ENCODE measurements at regions of chr22 and their contacts with region 1.

Region 1: DNA sequence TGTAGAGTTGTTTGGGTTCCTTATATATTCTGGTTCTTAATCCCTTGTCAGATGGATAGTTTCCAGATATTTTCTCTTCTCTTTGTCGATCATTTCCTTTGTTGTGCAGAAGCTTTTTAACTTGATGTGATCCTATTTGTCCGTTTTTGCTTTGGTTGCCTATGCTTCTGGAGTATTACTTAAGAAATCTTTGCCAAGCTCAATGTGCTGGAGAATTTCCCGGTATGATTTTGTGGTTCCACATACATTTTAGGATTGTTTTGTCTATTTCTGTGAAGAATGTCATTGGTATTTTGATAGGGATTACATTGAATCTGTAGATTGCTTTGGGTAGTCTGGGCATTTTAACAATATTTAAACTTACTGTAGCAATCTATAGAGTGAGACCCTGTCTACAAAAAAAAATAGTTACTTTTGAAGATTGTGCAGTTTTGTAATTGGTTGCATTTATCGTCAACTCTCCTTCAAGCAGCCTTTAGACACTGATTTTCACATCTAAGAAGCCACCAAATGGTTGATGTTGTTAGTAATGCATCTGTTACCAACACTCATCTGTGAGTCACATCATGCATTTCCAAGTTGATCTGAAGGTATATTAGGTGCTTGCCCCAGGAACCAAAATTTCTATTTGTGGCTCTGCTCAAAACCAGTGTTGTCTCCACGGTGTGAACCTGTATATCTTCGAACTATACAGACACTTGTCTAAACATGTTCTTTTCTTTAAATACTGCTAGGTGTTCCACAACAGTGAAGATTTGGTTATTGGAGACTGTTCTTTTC is 21.4 kb downstream of the XRCC6 start:
- DNase-seq: no peak
- ATAC-seq: no peak
- H3K4me3 Mint-ChIP-seq: no peak overlapping the region
- H3K27ac Mint-ChIP-seq: no peak overlapping the region
- H3K4me1 Mint-ChIP-seq: peaks cover 5% of the 10 kb centered on the region
- H3K27me3 Mint-ChIP-seq: no peaks in the 10 kb centered on the region
- CTCF ChIP-seq: no peak

Region 2: DNA sequence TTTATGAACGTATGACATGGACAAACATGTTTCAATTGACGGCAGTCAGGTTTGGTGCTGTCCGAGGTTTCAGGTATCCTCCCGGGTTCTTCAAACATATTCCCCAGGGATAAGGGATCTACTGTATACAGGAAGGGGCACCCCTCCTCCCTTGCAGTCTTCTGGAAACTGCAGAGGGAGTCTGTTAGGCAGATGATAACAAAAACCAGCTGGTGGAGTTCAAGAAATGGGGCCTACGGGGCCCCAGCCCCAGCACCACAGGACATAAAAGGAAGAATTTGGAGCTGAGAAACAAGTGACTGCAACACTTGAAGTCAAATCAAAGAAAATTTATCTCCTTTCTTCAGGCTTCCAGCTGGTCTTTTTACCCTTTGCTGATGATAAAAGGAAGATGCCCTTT is 14.0 kb after region 1 on chr22:
- CTCF ChIA-PET with region 1: interaction called, 4 read pairs
- POLR2A ChIA-PET with region 1: interaction called, 10 read pairs
- intact Hi-C with region 1: no loop called
- DNase-seq: no peak
- ATAC-seq: no peak
- H3K4me3 Mint-ChIP-seq: no peak overlapping the region
- H3K27ac Mint-ChIP-seq: no peak overlapping the region
- H3K4me1 Mint-ChIP-seq: no peaks in the 10 kb centered on the region
- H3K27me3 Mint-ChIP-seq: no peaks in the 10 kb centered on the region
- CTCF ChIP-seq: no peak

Region 3: DNA sequence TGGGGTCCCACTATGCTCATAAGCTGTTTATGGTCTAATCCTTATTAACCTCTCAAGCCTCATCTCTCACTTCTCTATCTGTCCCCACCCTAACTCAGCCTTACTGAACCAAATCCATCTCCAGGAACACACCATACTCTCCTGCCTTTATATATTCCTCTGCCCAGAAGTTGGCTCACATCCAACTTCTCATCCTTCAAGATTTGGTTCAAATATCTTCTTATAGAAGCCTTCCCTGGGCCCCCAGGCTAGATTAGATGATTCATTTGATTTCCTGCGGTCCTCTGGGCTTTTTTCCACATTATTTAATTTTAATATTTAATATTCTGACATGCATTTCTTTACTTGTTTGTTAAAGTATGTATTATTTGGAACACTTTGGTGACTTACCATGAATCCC is 80.0 kb after region 1 on chr22:
- CTCF ChIA-PET with region 1: no interaction called
- POLR2A ChIA-PET with region 1: no interaction called
- intact Hi-C with region 1: no loop called
- DNase-seq: no peak
- ATAC-seq: no peak
- H3K4me3 Mint-ChIP-seq: no peak overlapping the region
- H3K27ac Mint-ChIP-seq: no peak overlapping the region
- H3K4me1 Mint-ChIP-seq: no peaks in the 10 kb centered on the region
- H3K27me3 Mint-ChIP-seq: no peaks in the 10 kb centered on the region
- CTCF ChIP-seq: no peak

Measured in activated CD8-positive, alpha-beta T cell treated with anti-CD3 and anti-CD28 coated beads for 36 hours (primary cell).